ENCODE measurements at regions of chr11 and their contacts with region 1.

Region 1: DNA sequence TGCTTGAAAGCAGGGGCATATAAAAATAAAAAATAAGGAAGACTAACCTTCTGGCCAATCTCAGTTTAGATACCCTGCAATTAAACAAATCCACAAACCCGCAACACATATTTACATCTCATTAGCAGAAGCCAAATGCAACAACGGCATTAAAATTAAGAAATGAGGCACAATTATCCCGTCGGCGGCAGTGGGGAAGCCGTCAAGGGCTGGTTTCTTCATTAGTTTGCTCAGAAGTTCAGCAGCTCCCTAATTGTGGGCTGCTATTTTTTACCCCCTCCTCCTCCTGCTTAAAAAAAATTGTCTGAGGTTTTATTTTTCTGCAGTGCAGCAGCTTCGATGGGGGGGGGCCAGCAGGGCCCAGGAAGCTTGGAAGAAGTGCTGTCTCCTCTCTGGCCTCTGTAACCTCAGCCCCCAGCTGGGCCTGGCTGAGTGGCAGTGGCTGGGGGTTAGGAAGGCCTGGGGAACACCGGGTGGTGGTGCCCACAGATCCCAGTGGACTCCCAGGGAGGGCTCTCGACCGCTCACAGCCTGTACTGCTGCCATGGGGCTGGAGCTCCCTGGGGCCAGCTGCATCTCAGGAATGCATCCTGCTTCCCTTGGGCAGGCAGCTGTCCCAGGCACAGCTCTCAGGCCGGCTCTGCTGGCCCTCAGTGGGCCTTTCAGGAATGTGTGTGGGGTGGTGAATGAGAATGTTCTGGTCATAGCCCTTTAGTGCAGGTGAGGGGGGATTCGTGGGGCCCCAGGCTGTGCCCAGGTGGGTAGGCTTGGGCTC is 148.7 kb upstream of the B3GAT1 start:
- DNase-seq: peak in 1 of 10 donors; percentile 62

Region 2: GRCh38 chr11:134393638-134394037 is 167.1 kb before region 1 on chr11:
- intact Hi-C with region 1: loop called (anchors 10 kb)
- DNase-seq: peak in 8 of 10 donors; percentile 61 to 96 (median 72)

Region 3: GRCh38 chr11:134407321-134407828 is 153.4 kb before region 1 on chr11:
- intact Hi-C with region 1: no loop called
- DNase-seq: peak in 7 of 10 donors; percentile 31 to 92 (median 49)

Region 4: DNA sequence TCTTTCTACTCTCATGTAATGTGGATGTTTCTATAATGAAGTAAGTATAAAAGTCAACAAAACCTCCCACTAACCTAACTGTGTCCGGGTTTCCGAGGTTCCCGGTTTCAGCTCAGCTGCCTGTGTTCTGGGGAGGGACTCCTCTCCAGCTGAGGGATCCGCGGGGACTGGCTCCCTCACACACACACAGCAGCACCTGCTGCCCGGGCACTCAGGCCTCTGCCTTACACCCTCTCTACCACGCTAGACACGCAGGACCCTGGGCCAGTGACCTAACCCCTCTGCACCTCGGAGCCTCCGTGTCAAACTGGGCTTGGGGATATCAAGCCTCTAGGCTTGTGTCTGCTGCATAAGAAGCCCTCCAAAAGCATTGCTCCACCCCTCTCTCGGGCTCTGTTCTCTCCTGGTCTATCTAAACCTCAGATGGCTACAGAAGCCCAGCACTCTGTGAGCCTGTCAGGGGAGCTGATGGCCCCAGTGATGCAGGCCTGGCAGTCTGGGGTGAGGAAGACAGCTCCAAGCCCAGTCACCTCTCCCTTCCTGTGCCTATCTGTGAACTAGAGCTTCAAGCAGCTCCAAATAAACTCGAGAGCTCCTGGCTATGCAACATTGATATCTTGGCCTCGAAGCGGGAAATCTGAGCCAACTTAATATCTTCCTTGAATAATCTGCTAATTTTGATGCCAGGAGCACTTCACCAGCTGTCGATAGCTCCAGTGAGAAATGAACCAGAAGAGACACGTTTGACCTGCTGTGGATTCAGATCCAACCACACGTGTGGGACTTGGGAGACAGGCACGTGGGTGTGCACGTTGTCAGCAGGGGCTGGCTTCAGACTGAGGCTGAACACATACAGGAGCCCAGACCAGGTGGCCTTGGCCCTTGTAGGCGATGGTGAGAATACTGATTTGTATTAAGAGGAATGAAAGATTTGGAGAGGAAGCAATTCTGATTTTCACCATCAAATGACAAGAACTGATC is 84.0 kb after region 1 on chr11:
- intact Hi-C with region 1: no loop called
- DNase-seq: peak in 1 of 10 donors; percentile 82

Measured in posterior cingulate gyrus (tissue), 11 donors.